ENCODE measurements at regions of chr1 and their contacts with region 1.

Region 1: GRCh38 chr1:155308493-155309422 is at the start of gene FDPS:
- DNase-seq: peak; percentile 99
- H3K4me3 Mint-ChIP-seq: peak within 1 kb of the TSS; percentile 97
- H3K27ac Mint-ChIP-seq: peak within 1 kb of the TSS; percentile 97
- H3K4me1 Mint-ChIP-seq: peaks cover 44% of the 10 kb centered on the region
- H3K27me3 Mint-ChIP-seq: no peaks in the 10 kb centered on the region
- total RNA-seq, gene FDPS: 209 to 229 TPM

Region 2: DNA sequence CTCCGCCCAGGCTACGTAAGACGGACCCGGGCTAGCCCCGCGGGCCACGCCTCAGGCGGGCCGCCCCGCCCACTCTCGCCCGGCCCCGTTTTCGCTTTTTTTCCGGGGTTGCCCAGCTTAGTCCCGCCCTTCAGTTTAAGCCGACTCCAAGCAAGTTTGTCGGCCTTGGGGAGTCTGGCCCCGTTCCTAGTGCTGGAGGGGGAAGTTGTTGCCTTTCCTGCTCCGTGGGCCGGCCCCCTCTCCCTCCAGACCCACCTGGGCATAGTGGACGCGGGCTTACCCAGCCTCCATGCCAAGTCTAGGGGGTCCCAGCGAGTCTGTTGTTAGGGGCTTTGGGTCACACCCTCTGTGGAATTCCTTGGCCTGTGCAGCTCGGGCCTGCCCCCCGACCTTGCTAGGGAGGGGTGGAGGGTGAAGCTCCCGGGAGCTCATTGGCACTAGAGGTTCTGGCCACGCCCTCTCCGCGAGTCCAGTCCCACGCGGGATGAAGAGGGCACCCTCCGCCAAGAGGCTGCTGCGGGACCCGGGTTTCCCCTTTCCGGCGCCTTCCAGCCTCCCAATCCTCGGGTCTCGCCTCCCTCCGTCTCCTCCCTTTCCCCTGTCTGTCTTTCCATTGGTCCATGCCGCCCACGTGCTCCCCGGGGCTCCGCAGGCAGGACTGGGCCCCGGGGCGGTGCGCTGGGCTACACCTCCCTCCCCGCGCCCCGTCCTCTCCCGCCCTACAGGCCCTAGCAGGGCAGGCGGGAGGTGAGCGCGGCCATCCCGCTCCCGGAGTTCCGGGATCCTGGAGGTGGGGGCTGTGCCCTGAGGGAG is 15.2 kb after region 1 on chr1:
- CTCF ChIA-PET with region 1: interaction called, 39 read pairs
- POLR2A ChIA-PET with region 1: no interaction called
- DNase-seq: peak; percentile 91
- H3K4me3 Mint-ChIP-seq: peak overlapping the region; percentile 86
- H3K27ac Mint-ChIP-seq: peak overlapping the region; percentile 85
- H3K4me1 Mint-ChIP-seq: peaks cover 52% of the 10 kb centered on the region
- H3K27me3 Mint-ChIP-seq: no peaks in the 10 kb centered on the region

Region 3: DNA sequence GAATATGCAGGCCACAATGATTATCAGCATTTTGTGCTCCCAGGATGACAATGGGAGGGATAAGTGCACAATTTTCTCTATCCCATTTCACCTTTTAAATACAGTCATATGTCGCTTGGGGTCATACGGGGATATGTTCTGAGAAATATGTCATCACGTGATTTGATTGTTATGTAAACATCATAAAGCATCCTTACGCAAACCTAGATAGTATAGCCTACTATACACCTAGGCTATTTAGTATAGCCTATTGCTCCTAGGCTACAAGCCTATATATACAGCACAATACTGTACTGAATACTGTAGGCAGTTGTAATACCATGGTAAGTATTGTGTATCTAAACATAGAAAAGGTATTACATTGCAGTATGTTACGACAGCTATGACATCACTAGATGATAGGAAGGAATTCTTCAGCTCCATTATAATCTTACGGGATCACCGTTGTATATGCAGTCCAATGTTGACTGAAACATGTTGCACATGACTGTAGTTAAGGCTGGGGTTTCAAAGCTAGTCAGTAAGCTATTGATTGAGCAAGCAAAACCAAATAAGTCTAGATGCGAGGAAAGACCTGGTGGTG is 30.8 kb after region 1 on chr1:
- CTCF ChIA-PET with region 1: interaction called, 3 read pairs
- POLR2A ChIA-PET with region 1: interaction called, 10 read pairs
- DNase-seq: no peak
- H3K4me3 Mint-ChIP-seq: no peak overlapping the region
- H3K27ac Mint-ChIP-seq: no peak overlapping the region
- H3K4me1 Mint-ChIP-seq: no peaks in the 10 kb centered on the region
- H3K27me3 Mint-ChIP-seq: no peaks in the 10 kb centered on the region

Measured in activated CD4-positive, alpha-beta T cell treated with anti-CD3 and anti-CD28 coated beads, Interleukin-2, amount 10 ng/mL, durations not matched to agents 7 days and 5 days (primary cell).